ENCODE measurements at regions of chr19 and their contacts with region 1.

Region 1: DNA sequence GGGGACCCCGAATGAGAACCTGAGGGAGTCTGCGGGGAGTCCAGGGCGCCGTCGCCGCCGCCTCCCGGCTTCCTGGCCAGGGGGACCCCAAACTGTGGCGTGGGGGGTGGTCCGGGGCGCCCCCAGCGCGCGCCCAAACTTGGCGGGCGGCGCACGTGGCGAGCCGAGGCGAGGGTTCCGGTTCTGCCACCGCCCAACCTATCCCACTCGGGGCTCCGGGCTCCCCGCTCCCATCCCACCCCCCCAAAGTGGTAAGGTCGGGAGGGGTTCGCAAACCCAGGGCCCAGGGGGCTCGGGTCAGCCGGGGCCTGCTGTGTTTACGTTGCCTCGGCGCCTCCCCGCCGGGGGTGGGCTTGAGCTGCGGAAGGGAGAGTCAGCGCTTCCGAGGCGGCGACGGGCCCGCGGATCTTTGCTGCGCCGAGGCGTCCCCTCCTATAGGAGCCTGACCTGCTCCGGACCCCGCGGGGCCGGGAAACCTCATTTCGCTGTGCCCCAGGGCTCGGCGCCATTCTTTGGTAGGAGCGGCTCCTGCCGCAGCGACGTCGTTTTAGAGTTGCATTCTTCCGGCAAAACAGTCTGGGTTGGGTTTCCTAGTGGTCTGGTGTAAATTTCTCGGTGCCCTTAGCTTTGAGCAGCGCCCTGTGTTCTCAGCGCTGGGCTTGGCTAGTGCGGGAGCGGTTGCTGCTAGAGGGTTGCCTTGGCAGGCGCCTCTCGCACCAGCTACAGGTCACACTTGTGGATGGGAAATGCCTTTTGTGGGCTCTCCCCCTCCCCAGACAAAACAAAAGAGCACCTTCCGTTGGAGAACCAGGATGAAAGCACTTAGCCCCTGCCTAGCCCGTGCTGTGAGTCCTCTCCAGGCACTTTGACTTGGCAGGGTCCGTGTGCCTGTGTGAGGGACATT is 1.2 kb downstream of the DAZAP1 start:
- DNase-seq: peak; percentile 39 to 77 (median 59)
- ATAC-seq: peak; percentile 29 to 43
- H3K4me3 Mint-ChIP-seq: peak overlapping the region; percentile 89 to 97 (median 93)
- H3K27ac Mint-ChIP-seq: peak overlapping the region; percentile 91 to 98 (median 95)
- H3K4me1 Mint-ChIP-seq: peaks cover 30 to 59% (median 52%) of the 10 kb centered on the region in 4 donors
- H3K27me3 Mint-ChIP-seq: peaks cover 0 to 1% (median 0%) of the 10 kb centered on the region in 5 donors

Region 2: DNA sequence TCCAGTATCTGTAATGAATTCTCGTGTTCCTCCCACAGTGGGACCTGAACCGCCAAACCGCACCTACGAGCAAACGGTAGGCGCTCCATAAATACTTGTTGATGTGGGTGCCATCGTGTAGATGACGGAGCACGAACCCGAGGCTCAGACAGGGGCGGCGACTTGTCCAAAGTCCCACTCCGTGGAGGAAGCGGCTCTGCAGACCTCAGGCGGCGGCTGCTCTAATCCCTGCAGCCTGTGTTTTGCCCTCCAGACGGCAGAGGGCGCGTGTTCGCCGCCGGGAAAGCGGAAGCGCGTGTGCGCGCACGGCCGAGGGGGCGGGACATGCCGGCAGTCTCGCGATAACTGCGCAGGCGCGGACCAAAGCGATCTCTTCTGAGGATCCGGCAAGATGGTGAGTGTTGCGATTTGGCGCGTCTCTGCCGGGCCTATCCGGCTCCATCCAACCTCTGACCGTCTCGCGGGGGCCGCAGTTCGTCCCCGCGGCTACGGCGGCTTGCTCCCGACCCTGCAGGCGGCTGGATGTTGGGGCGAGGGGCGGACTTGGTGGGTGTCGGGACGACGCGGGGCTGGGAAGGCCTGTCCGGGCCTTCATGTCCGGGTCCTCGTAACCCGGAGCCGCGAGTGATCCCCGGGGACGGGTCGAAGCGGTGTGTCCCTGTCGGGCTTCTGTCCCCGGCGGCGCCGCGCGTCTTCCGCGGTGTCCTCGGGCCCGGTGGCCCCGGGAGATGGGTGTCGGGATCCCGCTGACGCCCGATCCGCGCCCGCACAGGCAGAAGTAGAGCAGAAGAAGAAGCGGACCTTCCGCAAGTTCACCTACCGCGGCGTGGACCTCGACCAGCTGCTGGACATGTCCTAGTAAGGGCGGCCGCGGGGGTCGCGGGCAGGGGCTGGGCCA is 29.7 kb after region 1 on chr19 and contains the start of gene RPS15:
- POLR2A ChIA-PET with region 1: interaction called, 10 read pairs
- DNase-seq: peak; percentile 90 to 98 (median 97)
- ATAC-seq: peak; percentile 82
- H3K4me3 Mint-ChIP-seq: peak within 1 kb of the TSS; percentile 94 to 99 (median 98)
- H3K27ac Mint-ChIP-seq: peak within 1 kb of the TSS; percentile 92 to 99 (median 99)
- H3K4me1 Mint-ChIP-seq: peaks cover 6 to 36% (median 25%) of the 10 kb centered on the region in 4 donors
- H3K27me3 Mint-ChIP-seq: peaks cover 0 to 2% (median 0%) of the 10 kb centered on the region in 5 donors
- polyA plus RNA-seq, gene RPS15: 3,438 to 4,304 (median 3,489) TPM